ENCODE measurements at regions of chr10 and their contacts with region 1.

Region 1: GRCh38 chr10:86970162-86970981 is 2.1 kb downstream of the ADIRF start:
- DNase-seq: no peak
- H3K4me3 ChIP-seq: peak overlapping the region; percentile 71
- H3K4me3 Mint-ChIP-seq: peak overlapping the region; percentile 76 to 92 (median 82)
- H3K27ac ChIP-seq: peak overlapping the region; percentile 61
- H3K27ac Mint-ChIP-seq: peak overlapping the region; percentile 74 to 97 (median 89)
- H3K4me1 ChIP-seq: peaks cover 46% of the 10 kb centered on the region
- H3K4me1 Mint-ChIP-seq: peaks cover 28 to 55% (median 38%) of the 10 kb centered on the region in 3 donors
- H3K27me3 ChIP-seq: no peaks in the 10 kb centered on the region
- H3K27me3 Mint-ChIP-seq: peaks cover 0 to 2% of the 10 kb centered on the region in 2 donors

Region 2: GRCh38 chr10:86899670-86900276 is 70.6 kb before region 1 on chr10:
- CTCF ChIA-PET with region 1: no interaction called
- POLR2A ChIA-PET with region 1: interaction called, 11 read pairs
- DNase-seq: peak in 4 of 5 donors; percentile 3 to 51 (median 12)
- H3K4me3 ChIP-seq: no peak overlapping the region
- H3K4me3 Mint-ChIP-seq: no peak overlapping the region
- H3K27ac ChIP-seq: no peak overlapping the region
- H3K27ac Mint-ChIP-seq: no peak overlapping the region
- H3K4me1 ChIP-seq: no peaks in the 10 kb centered on the region
- H3K4me1 Mint-ChIP-seq: no peaks in the 10 kb centered on the region
- H3K27me3 ChIP-seq: no peaks in the 10 kb centered on the region
- H3K27me3 Mint-ChIP-seq: no peaks in the 10 kb centered on the region

Region 3: DNA sequence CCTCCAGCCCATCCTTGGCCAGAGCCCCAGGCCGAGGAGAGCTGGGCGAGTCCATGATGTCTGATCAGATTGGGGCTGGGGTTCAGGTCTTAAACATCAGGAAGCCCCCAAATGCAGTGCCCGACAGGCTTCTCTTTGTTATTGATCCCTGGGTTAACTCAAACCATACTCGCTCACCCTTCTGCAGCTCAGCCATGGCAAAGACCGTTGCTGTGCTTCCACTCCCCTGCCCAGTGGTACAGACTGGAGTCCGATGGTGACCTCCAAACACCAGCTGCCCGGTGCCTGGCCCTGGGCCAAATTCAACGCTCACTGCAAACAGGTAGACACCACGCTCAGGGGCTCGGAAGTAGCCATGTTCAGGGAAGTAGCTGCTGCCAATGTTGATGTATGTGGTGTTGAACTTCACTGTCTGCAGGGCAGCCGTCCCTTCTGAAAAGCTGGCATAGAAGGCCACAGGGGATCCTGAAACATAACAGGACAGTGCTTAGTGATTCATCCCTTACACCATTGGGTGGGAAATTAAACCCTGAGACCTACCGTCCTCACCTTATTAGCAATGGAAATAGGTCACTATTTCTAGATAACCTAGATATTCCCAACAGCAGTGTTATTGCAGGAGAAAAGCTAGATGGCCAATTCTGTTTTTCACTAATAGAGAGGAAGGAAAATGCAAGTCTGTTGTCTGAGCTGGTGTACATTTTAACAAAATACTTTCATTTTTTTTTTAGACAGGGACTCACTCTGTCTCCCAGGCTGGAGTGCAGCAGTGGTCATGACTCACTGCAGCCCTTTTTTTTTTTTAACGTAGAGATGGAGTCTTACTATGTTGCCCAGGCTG is 33.5 kb before region 1 on chr10:
- CTCF ChIA-PET with region 1: interaction called, 61 read pairs
- POLR2A ChIA-PET with region 1: interaction called, 4 read pairs
- DNase-seq: no peak
- H3K4me3 ChIP-seq: no peak overlapping the region
- H3K4me3 Mint-ChIP-seq: no peak overlapping the region
- H3K27ac ChIP-seq: no peak overlapping the region
- H3K27ac Mint-ChIP-seq: peak overlapping the region in 1 of 8 donors; percentile 60
- H3K4me1 ChIP-seq: no peaks in the 10 kb centered on the region
- H3K4me1 Mint-ChIP-seq: peaks cover 0 to 4% (median 4%) of the 10 kb centered on the region in 3 donors
- H3K27me3 ChIP-seq: no peaks in the 10 kb centered on the region
- H3K27me3 Mint-ChIP-seq: peaks cover 0 to 2% of the 10 kb centered on the region in 2 donors

Measured in CD8-positive, alpha-beta memory T cell (primary cell).